ENCODE measurements at regions of chr12 and their contacts with region 1.

Region 1: GRCh38 chr12:46556105-46556559 is 183.6 kb upstream of the SLC38A2 start:
- DNase-seq: no peak
- H3K4me3 ChIP-seq: peak overlapping the region in 1 of 2 donors; percentile 7
- H3K27ac ChIP-seq: peak overlapping the region in 1 of 2 donors; percentile 6
- H3K4me1 ChIP-seq: peaks cover 0 to 20% of the 10 kb centered on the region in 2 donors
- H3K27me3 ChIP-seq: no peaks in the 10 kb centered on the region
- CTCF ChIP-seq: no peak

Region 2: GRCh38 chr12:46372544-46373110 is 183.5 kb before region 1 on chr12 and contains the start of gene SLC38A2:
- intact Hi-C with region 1: loop called (anchors 5 kb)
- DNase-seq: peak; percentile 90 to 99
- H3K4me3 ChIP-seq: peak within 1 kb of the TSS; percentile 94 to 98
- H3K27ac ChIP-seq: peak within 1 kb of the TSS; percentile 97 to 98
- H3K4me1 ChIP-seq: peaks cover 4 to 15% of the 10 kb centered on the region in 2 donors
- H3K27me3 ChIP-seq: no peaks in the 10 kb centered on the region
- CTCF ChIP-seq: no peak
- total RNA-seq, gene SLC38A2: 384 TPM

Region 3: DNA sequence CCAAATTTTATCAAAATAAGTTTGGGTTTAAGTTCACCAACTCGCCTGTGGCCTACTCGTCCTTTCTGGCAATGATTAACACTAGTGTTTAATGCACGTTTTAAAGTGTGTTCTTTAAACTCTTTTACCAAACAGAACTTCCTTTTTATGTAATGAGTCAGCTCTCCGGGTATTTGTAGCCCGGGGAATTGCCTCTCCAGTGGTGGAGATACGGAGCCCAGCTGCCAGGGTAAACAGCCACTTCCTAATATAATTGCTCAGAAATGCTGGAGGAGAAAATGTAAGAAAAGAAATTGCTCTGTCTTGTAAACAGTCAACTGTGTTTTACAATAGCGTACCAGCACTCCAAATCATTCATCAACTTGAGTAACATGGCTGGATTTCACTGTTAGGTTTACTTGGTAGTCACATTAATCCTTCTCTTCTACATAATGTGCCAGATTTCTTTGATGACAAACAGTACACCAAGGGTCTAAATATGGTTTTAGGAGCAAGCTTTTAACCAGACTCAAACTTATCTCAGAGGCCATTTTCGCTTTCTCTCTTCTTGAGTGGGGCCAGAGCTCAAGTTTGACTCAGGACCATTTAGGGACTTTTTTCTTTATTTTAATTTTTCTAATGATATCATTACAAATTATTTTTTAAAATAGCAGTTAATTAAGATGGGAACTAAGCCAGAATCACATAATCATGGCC is 82.3 kb before region 1 on chr12:
- intact Hi-C with region 1: loop called (anchors 5 kb)
- DNase-seq: peak; percentile 30 to 92
- H3K4me3 ChIP-seq: peak overlapping the region; percentile 14 to 37
- H3K27ac ChIP-seq: peak overlapping the region; percentile 86 to 93
- H3K4me1 ChIP-seq: peaks cover 4 to 23% of the 10 kb centered on the region in 2 donors
- H3K27me3 ChIP-seq: no peaks in the 10 kb centered on the region
- CTCF ChIP-seq: no peak

Region 4: DNA sequence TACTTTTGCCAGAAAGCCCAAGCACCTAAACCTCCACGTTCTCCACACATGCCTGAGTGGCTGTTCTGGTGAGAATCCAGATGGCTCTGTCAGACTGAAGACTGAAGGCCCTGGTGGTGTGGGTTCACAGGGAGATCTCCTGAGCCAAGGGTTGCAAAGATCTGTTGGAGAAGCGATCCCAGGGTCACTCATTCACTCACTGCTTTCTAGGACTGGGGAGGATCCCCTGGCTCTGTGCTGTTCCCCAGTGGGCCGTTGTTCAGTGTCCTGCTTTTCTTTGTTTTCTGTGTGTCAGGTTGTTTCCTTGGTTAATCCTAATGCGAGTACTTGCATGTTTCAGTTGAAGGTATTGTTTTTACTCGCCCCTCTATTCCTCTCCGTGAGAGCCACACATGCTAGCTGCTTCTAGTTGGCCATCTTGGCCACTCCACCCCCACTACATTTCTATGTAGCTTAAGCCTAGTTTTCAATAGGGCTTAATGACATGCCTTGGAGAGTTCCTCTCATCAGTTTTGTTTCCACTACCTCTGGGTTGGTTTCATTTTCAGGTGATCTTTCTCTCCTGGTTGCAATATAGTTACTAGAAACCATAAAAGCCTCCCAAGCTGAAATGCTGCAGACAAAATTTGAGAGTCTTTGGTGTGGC is 39.1 kb before region 1 on chr12:
- intact Hi-C with region 1: loop called (anchors 5 kb)
- DNase-seq: no peak
- H3K4me3 ChIP-seq: no peak overlapping the region
- H3K27ac ChIP-seq: no peak overlapping the region
- H3K4me1 ChIP-seq: peaks cover 0 to 18% of the 10 kb centered on the region in 2 donors
- H3K27me3 ChIP-seq: no peaks in the 10 kb centered on the region
- CTCF ChIP-seq: no peak

Region 5: GRCh38 chr12:46577063-46577776 is 21.1 kb after region 1 on chr12:
- intact Hi-C with region 1: loop called (anchors 2 kb)
- DNase-seq: no peak
- H3K4me3 ChIP-seq: no peak overlapping the region
- H3K27ac ChIP-seq: peak overlapping the region; percentile 62 to 79
- H3K4me1 ChIP-seq: peaks cover 4 to 34% of the 10 kb centered on the region in 2 donors
- H3K27me3 ChIP-seq: no peaks in the 10 kb centered on the region
- CTCF ChIP-seq: no peak

Region 6: DNA sequence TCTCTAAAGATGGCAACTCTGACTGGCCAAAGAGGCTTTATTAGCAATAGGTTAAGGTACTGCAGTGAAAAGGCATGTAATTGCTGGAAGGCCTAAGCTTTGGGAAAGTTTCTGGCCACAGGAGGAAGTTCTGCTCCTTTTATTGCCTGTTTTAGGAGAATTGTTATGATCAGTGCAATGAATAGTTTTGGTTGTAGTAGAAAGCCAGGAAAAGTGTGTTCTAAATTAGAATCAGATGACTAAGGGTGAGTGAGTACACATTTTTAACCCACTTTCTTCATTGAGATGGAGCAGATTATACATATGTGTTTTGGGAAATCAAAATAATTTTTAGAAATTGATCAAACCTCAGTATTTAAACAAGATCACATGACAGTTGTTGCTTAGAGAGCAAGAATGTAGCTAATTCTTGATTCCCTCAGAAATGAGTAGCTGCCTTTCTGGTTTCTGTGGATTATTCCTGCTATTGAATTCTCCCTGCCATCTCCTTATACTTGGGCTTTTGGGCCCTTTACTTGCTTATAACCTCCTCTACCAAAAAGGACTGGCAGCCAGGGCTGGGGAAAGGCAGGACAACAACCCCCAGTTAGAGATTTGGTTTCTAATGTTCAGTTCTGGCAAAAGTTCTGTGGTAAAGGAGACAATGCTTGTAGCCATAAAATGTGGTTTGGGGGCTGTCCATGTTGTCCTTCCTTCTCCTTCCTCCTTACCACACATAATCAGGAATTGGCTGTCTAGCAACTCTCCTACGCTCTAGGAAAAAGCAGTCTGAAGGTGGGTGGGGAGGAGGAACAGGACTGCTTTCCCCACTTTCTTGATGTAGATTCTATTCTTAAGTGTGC is 52.5 kb after region 1 on chr12:
- intact Hi-C with region 1: loop called (anchors 5 kb)
- DNase-seq: no peak
- H3K4me3 ChIP-seq: no peak overlapping the region
- H3K27ac ChIP-seq: peak overlapping the region; percentile 73 to 87
- H3K4me1 ChIP-seq: peaks cover 0 to 26% of the 10 kb centered on the region in 2 donors
- H3K27me3 ChIP-seq: no peaks in the 10 kb centered on the region
- CTCF ChIP-seq: no peak

Measured in ascending aorta (tissue), 2 donors.